ENCODE measurements at regions of chr11 and their contacts with region 1.

Region 1: DNA sequence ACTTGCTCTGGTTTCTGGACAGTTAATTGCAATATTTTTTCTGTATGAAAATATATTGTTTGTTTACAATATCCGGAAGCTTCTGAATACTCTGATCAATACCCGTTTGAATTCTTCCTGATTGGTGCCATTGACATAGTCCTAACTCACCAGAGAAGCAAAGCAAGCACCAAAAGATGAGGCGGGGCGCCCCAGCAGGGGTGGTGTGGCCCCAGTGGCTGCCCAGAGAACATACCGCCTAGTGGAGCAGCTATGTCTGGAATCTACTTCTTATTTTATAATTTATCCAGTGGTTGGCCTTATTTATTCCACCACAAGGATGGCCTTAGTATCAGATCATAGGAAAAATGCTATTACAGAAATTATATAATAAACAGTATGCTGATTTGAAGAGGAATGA is 610.7 kb downstream of the JRKL start:
- DNase-seq: no peak
- ATAC-seq: no peak
- H3K4me3 ChIP-seq: no peak overlapping the region
- H3K4me3 Mint-ChIP-seq: no peak overlapping the region
- H3K27ac ChIP-seq: no peak overlapping the region
- H3K27ac Mint-ChIP-seq: no peak overlapping the region
- H3K4me1 ChIP-seq: no peaks in the 10 kb centered on the region
- H3K4me1 Mint-ChIP-seq: no peaks in the 10 kb centered on the region
- H3K27me3 ChIP-seq: no peaks in the 10 kb centered on the region
- H3K27me3 Mint-ChIP-seq: no peaks in the 10 kb centered on the region

Region 2: DNA sequence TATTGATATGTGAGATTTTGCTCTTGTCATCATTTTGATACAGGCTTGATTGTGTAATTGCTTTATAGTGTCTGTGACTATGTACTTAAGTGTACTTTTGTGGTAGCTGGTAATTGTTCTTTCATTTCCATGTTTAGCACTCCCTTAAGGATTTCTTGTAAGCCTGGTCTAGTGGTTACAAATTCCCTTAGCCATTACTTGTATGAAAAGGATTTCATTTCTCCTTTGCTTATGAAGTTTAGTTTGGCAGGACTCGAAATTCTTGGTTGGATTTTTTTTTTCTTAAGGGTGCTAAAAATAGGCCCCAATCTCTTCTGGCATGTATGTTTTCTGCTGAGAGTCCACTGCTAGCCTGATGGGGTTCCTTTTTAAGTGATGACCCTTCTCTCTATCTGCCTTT is 263.9 kb before region 1 on chr11:
- CTCF ChIA-PET with region 1: interaction called in 1 of 2 experiments, 12 read pairs
- POLR2A ChIA-PET with region 1: no interaction called
- DNase-seq: no peak
- ATAC-seq: no peak
- H3K4me3 ChIP-seq: no peak overlapping the region
- H3K4me3 Mint-ChIP-seq: no peak overlapping the region
- H3K27ac ChIP-seq: no peak overlapping the region
- H3K27ac Mint-ChIP-seq: no peak overlapping the region
- H3K4me1 ChIP-seq: no peaks in the 10 kb centered on the region
- H3K4me1 Mint-ChIP-seq: no peaks in the 10 kb centered on the region
- H3K27me3 ChIP-seq: no peaks in the 10 kb centered on the region
- H3K27me3 Mint-ChIP-seq: no peaks in the 10 kb centered on the region

Region 3: DNA sequence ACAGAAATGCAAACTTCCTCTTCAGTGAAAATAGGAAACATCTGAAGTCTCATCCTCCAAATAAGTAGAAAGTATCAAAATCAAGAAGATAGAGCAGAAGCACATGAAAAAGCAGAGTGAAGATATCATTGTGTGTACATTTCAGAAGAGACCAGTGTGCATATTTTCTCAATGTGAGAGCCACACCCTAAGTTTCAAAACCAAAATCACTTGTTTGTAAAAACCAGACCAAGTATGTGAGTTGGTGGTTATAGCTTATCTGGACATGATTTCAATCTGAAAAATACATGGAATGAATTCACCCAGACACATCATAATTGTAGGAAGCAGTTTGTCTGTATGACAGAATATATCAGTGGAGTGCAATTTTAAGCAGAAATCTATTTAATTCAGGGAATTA is 74.6 kb before region 1 on chr11:
- CTCF ChIA-PET with region 1: interaction called in 1 of 2 experiments, 13 read pairs
- POLR2A ChIA-PET with region 1: no interaction called
- DNase-seq: no peak
- ATAC-seq: no peak
- H3K4me3 ChIP-seq: no peak overlapping the region
- H3K4me3 Mint-ChIP-seq: no peak overlapping the region
- H3K27ac ChIP-seq: no peak overlapping the region
- H3K27ac Mint-ChIP-seq: no peak overlapping the region
- H3K4me1 ChIP-seq: no peaks in the 10 kb centered on the region
- H3K4me1 Mint-ChIP-seq: no peaks in the 10 kb centered on the region
- H3K27me3 ChIP-seq: no peaks in the 10 kb centered on the region
- H3K27me3 Mint-ChIP-seq: no peaks in the 10 kb centered on the region

Region 4: DNA sequence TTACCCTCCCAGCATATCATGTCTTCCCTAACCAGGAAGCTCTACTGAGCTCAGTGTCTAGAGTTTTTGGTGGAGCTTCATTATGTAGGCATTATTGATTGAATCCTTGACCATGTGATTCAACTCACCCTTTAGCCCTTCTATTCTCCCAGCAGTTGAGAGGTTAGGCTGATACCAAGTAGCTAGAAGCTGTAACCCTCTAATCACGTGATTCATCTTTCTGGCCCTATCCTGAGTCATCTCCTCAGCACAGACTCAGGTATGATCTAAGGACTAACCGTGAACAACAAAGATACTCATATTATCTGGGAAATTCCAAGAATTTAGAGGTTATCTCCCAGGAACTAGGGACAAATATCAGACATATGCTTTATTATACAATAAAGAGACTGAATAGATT is 14.8 kb after region 1 on chr11:
- CTCF ChIA-PET with region 1: no interaction called
- POLR2A ChIA-PET with region 1: no interaction called
- DNase-seq: no peak
- ATAC-seq: no peak
- H3K4me3 ChIP-seq: no peak overlapping the region
- H3K4me3 Mint-ChIP-seq: no peak overlapping the region
- H3K27ac ChIP-seq: no peak overlapping the region
- H3K27ac Mint-ChIP-seq: no peak overlapping the region
- H3K4me1 ChIP-seq: no peaks in the 10 kb centered on the region
- H3K4me1 Mint-ChIP-seq: no peaks in the 10 kb centered on the region
- H3K27me3 ChIP-seq: no peaks in the 10 kb centered on the region
- H3K27me3 Mint-ChIP-seq: no peaks in the 10 kb centered on the region

Measured in T-cell (primary cell).